ENCODE measurements at regions of chr11 and their contacts with region 1.

Region 1: DNA sequence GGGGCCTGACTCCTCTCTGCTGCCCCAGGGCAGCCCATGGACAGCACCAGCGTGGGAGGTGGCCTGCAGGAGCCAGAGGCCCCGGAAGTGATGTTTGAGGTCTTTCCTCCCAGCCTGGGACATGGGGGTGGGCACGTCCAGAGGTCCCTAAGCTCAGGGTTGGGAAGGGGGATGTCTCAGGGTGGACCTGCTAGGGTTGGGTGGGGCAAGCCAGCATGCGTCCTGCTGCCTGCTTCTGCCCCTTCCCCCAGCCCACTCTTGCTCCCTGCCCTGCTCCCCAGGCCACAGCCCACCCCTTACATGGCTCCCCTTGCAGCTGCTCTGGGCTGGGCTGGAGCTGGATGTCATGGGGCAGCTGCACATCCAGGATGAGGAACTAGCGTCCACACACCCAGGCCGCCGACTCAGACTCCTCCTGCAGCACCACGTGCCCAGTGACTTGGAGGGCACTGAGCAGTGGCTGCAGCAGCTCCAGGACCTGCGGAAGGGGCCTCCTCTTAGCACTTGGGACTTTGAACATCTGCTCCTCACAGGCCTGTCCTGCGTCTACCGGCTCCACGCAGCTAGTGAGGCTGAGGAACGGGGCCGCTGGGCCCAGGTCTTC is 1.3 kb downstream of the FAM180B start:
- DNase-seq: no peak
- ATAC-seq: peak; percentile 64
- H3K4me3 ChIP-seq: peak overlapping the region; percentile 49 to 70 (median 53); a peak in 5 of 6 replicates
- H3K27ac ChIP-seq: no peak overlapping the region
- H3K4me1 ChIP-seq: peaks cover 51% of the 10 kb centered on the region
- H3K27me3 ChIP-seq: peaks cover 0 to 3% of the 10 kb centered on the region in 2 experiments; a peak in 3 of 5 replicates
- CTCF ChIP-seq: no peak
- EP300 ChIP-seq: no peak
- POLR2A ChIP-seq: no peak
- RAD21 ChIP-seq: no peak

Region 2: GRCh38 chr11:47067401-47067800 is 520.4 kb before region 1 on chr11:
- CTCF ChIA-PET with region 1: no interaction called
- POLR2A ChIA-PET with region 1: no interaction called
- in situ Hi-C with region 1: no loop called
- intact Hi-C with region 1: loop called (anchors 5 kb)
- DNase-seq: no peak
- ATAC-seq: no peak
- H3K4me3 ChIP-seq: no peak overlapping the region
- H3K27ac ChIP-seq: no peak overlapping the region
- H3K4me1 ChIP-seq: no peaks in the 10 kb centered on the region
- H3K27me3 ChIP-seq: no peaks in the 10 kb centered on the region
- CTCF ChIP-seq: no peak
- EP300 ChIP-seq: no peak
- POLR2A ChIP-seq: no peak
- RAD21 ChIP-seq: no peak

Measured in HepG2 (cell line).